ENCODE measurements at regions of chr12 and their contacts with region 1.

Region 1: GRCh38 chr12:131003716-131004045 is 50.0 kb downstream of the ADGRD1 start:
- DNase-seq: no peak
- H3K4me3 ChIP-seq: no peak overlapping the region
- H3K27ac ChIP-seq: no peak overlapping the region
- H3K4me1 ChIP-seq: no peaks in the 10 kb centered on the region
- H3K27me3 ChIP-seq: peaks cover 7% of the 10 kb centered on the region
- CTCF ChIP-seq: no peak

Region 2: GRCh38 chr12:130526813-130527212 is 476.9 kb before region 1 on chr12:
- CTCF ChIA-PET with region 1: no interaction called
- POLR2A ChIA-PET with region 1: no interaction called
- intact Hi-C with region 1: no loop called
- DNase-seq: peak; percentile 24
- H3K4me3 ChIP-seq: no peak overlapping the region
- H3K27ac ChIP-seq: no peak overlapping the region
- H3K4me1 ChIP-seq: no peaks in the 10 kb centered on the region
- H3K27me3 ChIP-seq: peaks cover 41% of the 10 kb centered on the region
- CTCF ChIP-seq: no peak

Region 3: GRCh38 chr12:130925666-130926015 is 78.0 kb before region 1 on chr12:
- CTCF ChIA-PET with region 1: no interaction called
- POLR2A ChIA-PET with region 1: interaction called, 10 read pairs
- intact Hi-C with region 1: no loop called
- DNase-seq: no peak
- H3K4me3 ChIP-seq: no peak overlapping the region
- H3K27ac ChIP-seq: no peak overlapping the region
- H3K4me1 ChIP-seq: no peaks in the 10 kb centered on the region
- H3K27me3 ChIP-seq: peaks cover 34% of the 10 kb centered on the region
- CTCF ChIP-seq: no peak

Measured in A673 (cell line).